Mucosa of descending colon (tissue), 3 donors: ENCODE measurements at regions of chr2 and their contacts with region 1.

Region 1: DNA sequence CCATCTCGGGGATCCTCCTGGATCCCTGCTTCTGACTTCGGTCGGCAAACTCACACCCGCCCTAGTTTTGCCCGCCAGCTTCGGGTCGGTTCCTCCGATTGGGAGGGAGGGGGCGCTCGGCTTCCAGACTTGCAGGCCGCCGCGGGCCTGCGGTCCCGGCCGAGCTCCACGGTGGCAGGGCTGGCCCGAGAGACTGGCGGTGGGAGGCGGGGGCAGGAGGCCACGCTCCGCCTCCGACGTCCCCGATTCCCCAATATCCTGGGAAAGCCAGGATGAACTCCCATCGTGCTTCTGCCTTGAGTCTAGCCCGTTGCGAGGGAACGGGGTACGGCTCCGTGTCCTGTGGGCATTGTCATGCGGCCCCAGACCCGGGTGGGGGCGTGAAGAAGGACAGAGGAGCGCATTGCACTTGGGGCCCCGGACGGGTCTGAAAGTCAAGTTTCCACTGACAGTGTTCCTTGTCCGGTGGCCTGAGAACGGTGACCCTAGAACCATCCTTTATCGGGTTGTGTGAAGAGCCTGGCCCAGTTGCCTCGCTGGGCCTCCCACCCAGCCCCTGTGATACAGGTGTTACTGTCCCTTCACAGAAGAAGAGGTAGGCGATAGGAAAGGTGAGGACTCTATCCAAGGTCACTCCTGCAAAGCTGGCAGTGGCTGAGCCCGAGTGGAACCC is 2.4 kb upstream of the INHBB start:
- DNase-seq: peak; percentile 68 to 73 (median 71)
- ATAC-seq: peak; percentile 70
- H3K4me3 ChIP-seq: no peak overlapping the region
- H3K4me1 ChIP-seq: peaks cover 22% of the 10 kb centered on the region
- CTCF ChIP-seq: peak; percentile 49

Region 2: GRCh38 chr2:120552800-120553481 is 209.4 kb after region 1 on chr2:
- intact Hi-C with region 1: loop called in 1 of 2 experiments (anchors 10 kb)
- DNase-seq: peak; percentile 79 to 89 (median 86)
- ATAC-seq: peak; percentile 98
- H3K4me3 ChIP-seq: no peak overlapping the region
- H3K4me1 ChIP-seq: peaks cover 9% of the 10 kb centered on the region
- CTCF ChIP-seq: peak; percentile 66

Region 3: DNA sequence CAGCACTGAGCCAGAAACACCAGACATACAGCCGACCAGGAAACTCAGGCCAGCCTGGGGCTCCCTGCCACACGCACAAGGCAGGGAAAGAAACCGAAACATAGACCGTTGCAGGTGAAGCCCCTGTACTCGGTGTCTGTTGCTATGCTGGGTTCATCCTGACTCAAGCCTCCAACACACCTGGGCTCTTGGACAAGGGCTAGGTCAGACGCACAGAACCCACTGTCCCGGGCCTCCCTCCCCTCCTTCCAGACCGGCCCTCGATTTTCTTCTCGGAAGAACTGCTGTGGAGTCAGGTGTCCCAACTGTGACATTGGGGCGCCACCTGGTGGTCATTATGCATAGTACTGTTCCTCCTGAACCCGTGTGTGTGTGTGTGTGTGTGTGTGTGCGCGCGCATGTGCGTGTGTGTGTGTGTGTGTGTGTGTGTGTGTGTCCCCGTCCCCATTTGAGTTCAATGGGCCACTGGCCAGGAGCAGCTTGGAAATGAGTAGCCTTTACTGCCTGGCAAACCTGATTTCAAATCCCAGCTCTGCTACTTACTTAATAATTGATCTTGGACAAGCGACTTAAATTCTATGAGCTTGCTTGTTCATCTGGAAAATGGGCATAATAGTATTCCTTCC is 336.7 kb after region 1 on chr2:
- intact Hi-C with region 1: loop called (anchors 2 to 10 kb)
- DNase-seq: peak in 2 of 3 donors; percentile 68 to 84
- ATAC-seq: peak; percentile 88
- H3K4me3 ChIP-seq: no peak overlapping the region
- H3K4me1 ChIP-seq: no peaks in the 10 kb centered on the region
- CTCF ChIP-seq: no peak